Activated naive CD4-positive, alpha-beta T cell treated with anti-CD3 and anti-CD28 coated beads for 36 hours (primary cell): ENCODE measurements at regions of chr2 and their contacts with region 1.

Region 1: GRCh38 chr2:164910101-164910899 is 45.0 kb downstream of the SLC38A11 start:
- DNase-seq: peak; percentile 60
- H3K4me3 Mint-ChIP-seq: no peak overlapping the region
- H3K27ac Mint-ChIP-seq: no peak overlapping the region
- H3K4me1 Mint-ChIP-seq: peaks cover 3% of the 10 kb centered on the region
- H3K27me3 Mint-ChIP-seq: peaks cover 6% of the 10 kb centered on the region

Region 2: DNA sequence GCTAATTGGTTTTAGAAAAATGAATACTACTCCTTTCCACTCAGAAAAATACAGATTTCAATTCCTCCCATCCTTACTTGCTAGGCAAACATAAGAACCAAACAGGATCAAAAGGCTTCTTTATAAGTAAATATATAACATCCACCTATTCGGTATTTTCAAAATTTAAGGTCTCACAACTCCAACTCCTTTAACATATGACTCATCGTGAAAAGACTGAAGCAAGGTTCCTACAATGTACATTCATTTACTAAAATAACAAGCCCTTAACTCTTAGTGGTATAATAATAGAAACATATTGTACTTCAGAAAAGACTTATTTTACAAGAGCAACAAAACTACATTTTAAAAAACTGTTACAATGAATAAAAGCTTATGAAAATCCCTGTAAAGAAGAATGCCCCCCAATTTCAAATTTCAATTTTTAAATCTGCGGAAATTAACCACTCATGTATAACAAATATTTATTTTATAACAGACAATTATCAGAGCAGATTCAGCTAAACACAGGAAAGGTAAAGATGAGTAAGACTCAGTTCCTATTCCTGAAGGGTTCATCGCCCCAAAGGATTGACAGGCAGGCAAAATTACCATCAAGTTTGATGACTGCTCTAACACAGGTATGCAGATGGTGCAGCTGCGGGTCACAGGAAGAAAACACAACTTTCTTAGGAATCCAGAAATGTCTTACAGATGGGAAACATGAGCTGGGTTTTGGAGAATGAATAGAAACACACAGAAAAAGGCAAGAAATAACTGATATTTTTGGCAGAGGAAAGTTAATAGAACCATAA is 165.1 kb before region 1 on chr2:
- CTCF ChIA-PET with region 1: no interaction called
- intact Hi-C with region 1: no loop called
- DNase-seq: no peak
- H3K4me3 Mint-ChIP-seq: no peak overlapping the region
- H3K27ac Mint-ChIP-seq: no peak overlapping the region
- H3K4me1 Mint-ChIP-seq: no peaks in the 10 kb centered on the region
- H3K27me3 Mint-ChIP-seq: no peaks in the 10 kb centered on the region

Region 3: DNA sequence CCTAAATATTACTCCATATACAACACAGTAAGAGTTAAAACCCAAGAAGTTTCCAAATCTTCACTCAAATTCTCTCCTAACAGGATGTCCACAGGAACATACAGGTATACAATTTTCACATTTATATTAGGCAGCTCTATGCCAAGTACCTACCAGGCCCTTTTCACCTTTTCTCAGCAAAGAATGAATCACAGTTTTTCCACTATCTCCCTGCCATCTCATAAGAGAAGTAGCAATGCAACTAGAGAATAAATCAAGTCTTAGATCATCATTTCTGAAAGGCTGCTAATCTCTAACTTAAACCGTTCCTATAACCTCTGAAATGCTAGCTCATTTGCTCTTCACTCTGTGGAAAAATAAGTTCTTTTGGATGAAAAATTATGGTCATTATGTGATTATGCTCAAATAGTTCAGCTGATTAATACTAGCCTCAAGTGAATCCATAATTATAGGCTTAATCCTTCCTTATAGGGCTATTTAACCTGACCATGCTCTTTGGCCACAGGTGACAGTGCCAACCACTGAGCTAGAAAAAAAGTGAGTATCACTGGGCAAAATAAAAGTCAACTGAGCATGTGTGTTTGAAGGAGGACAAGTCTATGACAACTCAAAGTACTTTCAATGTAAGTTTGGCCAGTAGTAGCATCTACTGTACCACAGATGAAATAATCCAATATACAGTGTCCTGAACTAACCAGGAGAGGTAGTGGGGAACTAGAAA is 148.4 kb before region 1 on chr2:
- CTCF ChIA-PET with region 1: no interaction called
- intact Hi-C with region 1: loop called (anchors 1 kb)
- DNase-seq: no peak
- H3K4me3 Mint-ChIP-seq: no peak overlapping the region
- H3K27ac Mint-ChIP-seq: no peak overlapping the region
- H3K4me1 Mint-ChIP-seq: peaks cover 5% of the 10 kb centered on the region
- H3K27me3 Mint-ChIP-seq: no peaks in the 10 kb centered on the region

Region 4: GRCh38 chr2:164841719-164842623 is 68.3 kb before region 1 on chr2 and contains the start of gene COBLL1:
- CTCF ChIA-PET with region 1: no interaction called
- intact Hi-C with region 1: loop called (anchors 5 kb)
- DNase-seq: peak; percentile 47
- H3K4me3 Mint-ChIP-seq: peak within 1 kb of the TSS; percentile 68
- H3K27ac Mint-ChIP-seq: no peak within 1 kb of the TSS
- H3K4me1 Mint-ChIP-seq: peaks cover 5% of the 10 kb centered on the region
- H3K27me3 Mint-ChIP-seq: peaks cover 31% of the 10 kb centered on the region
- total RNA-seq, gene COBLL1: not detected

Region 5: DNA sequence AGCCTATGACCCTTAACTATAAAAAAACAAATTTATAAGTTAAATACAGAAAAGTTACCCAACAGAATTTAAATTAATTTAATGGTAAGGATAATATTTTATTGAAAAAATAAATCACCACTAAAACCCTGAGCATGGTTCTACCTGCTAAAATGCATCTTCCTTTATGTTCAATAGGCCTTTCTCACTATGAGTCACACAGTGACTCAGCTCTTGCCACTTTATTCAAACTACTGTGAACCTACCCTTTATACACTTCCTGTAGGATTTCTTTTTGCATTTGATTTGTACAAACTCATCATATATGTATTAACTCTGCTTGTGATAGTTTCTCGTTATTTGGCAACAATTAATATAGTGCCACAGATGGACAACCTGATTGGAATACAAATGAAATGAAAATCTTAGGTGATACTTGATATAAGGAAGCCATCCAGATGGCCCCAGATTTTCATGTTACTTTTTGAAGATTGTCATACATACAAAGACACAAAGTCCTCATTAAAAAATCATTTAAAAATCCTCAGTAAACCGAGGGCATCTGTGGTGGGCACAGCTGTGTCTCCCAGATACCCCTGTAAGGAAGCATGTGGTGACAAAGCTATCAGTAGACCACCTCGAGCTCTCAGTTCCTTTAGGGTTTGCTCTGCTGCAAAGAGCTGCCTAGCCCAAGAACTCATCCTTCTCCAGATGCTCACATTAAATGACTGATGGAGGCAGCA is 13.5 kb before region 1 on chr2:
- CTCF ChIA-PET with region 1: no interaction called
- intact Hi-C with region 1: loop called (anchors 1 kb)
- DNase-seq: peak; percentile 34
- H3K4me3 Mint-ChIP-seq: no peak overlapping the region
- H3K27ac Mint-ChIP-seq: no peak overlapping the region
- H3K4me1 Mint-ChIP-seq: no peaks in the 10 kb centered on the region
- H3K27me3 Mint-ChIP-seq: no peaks in the 10 kb centered on the region

Region 6: DNA sequence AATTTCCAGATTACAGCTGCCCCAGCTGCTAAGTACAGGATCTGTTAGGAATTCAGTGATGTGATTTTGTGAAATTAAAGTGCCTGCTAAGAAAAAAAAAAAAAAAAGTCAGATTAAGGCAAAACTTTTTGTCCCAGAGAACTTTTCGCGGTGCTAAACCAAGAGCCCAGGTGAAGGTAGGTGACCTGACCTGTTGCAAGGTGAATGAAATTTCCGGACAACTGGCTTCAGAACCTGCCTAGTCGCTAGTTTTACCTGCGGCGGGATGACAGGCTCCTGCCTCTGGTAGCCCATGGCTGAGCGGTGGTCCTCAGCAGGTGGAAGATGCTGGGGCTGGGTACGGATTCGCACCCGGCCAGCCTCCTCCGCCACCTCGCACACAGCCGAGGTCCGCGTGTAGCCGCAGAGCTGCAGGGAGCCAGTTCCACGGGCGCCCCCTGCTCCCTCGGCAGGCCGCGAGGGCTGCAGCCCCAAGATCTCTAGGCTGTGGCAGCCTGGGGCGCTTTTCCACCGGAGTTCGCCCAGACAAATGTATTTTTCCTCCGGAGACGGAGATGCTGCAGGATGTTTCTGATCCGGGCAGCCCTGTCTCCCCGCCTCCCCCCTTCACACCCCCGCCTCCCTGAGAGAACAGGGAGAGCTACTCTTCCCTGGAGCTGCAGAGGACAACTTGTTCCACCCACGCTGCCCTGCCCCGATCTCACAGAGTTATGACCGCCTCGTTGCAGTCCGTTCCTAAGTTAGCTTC is 44.8 kb after region 1 on chr2 and contains the start of gene SLC38A11:
- CTCF ChIA-PET with region 1: no interaction called
- intact Hi-C with region 1: loop called (anchors 2 kb)
- DNase-seq: no peak
- H3K4me3 Mint-ChIP-seq: no peak within 1 kb of the TSS
- H3K27ac Mint-ChIP-seq: no peak within 1 kb of the TSS
- H3K4me1 Mint-ChIP-seq: no peaks in the 10 kb centered on the region
- H3K27me3 Mint-ChIP-seq: peaks cover 17% of the 10 kb centered on the region
- total RNA-seq, gene SLC38A11: not detected